ENCODE measurements at regions of chr6 and their contacts with region 1.

Region 1: GRCh38 chr6:11424395-11425050 is 113.0 kb upstream of the TMEM170B start:
- DNase-seq: no peak
- ATAC-seq: no peak
- H3K4me3 ChIP-seq: no peak overlapping the region
- H3K4me3 Mint-ChIP-seq: no peak overlapping the region
- H3K27ac ChIP-seq: no peak overlapping the region
- H3K27ac Mint-ChIP-seq: no peak overlapping the region
- H3K4me1 ChIP-seq: peaks cover 6% of the 10 kb centered on the region
- H3K4me1 Mint-ChIP-seq: peaks cover 13% of the 10 kb centered on the region
- H3K27me3 ChIP-seq: no peaks in the 10 kb centered on the region
- H3K27me3 Mint-ChIP-seq: no peaks in the 10 kb centered on the region
- CTCF ChIP-seq: no peak

Region 2: DNA sequence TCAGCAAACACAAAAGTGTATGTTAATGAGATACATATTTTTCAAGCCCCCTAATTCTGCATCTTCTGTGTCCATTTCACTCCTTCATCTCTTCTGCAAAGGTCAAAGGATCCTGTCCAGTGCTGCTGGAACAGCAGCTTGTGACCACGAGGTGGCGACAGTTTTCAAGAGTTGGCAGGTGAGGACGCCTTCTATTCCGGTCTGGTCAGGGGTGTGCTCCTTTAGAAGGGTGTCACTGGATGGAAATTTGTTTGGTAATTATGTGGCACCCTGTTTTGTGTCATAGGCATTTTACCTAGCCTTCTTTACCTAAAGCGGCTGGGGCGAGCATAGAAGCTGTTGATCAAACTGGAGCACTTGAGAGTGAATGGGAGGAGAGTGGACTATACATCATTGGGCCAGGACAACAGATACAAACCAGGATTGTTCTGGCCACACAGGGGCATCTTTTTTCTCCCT is 280.1 kb before region 1 on chr6:
- CTCF ChIA-PET with region 1: no interaction called
- POLR2A ChIA-PET with region 1: no interaction called
- intact Hi-C with region 1: no loop called
- DNase-seq: peak; percentile 51 to 84 (median 64)
- ATAC-seq: peak; percentile 73
- H3K4me3 ChIP-seq: no peak overlapping the region
- H3K4me3 Mint-ChIP-seq: no peak overlapping the region
- H3K27ac ChIP-seq: no peak overlapping the region
- H3K27ac Mint-ChIP-seq: no peak overlapping the region
- H3K4me1 ChIP-seq: peaks cover 5% of the 10 kb centered on the region
- H3K4me1 Mint-ChIP-seq: no peaks in the 10 kb centered on the region
- H3K27me3 ChIP-seq: no peaks in the 10 kb centered on the region
- H3K27me3 Mint-ChIP-seq: no peaks in the 10 kb centered on the region
- CTCF ChIP-seq: peak; percentile 98

Region 3: DNA sequence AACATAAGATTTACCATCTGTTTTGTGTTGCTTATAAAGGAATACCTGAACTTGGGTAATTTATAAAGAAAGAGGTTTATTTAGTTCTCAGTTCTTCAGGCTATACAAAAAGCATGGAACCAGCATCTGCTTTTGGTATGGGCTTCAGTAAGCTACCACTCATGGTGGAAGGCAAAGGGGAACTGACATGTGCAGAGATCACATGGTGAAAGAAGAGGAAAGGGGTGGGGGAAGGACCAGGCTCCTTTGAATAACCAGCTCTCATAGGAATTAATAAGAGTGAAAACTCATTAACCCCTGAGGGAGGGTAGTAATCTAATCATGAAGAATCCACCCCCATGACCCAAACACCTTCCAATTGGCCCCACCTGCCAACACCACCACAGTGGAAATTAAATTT is 23.5 kb after region 1 on chr6:
- CTCF ChIA-PET with region 1: no interaction called
- POLR2A ChIA-PET with region 1: no interaction called
- intact Hi-C with region 1: loop called in 1 of 2 experiments (anchors 1 kb)
- DNase-seq: no peak
- ATAC-seq: no peak
- H3K4me3 ChIP-seq: no peak overlapping the region
- H3K4me3 Mint-ChIP-seq: no peak overlapping the region
- H3K27ac ChIP-seq: no peak overlapping the region
- H3K27ac Mint-ChIP-seq: no peak overlapping the region
- H3K4me1 ChIP-seq: no peaks in the 10 kb centered on the region
- H3K4me1 Mint-ChIP-seq: no peaks in the 10 kb centered on the region
- H3K27me3 ChIP-seq: no peaks in the 10 kb centered on the region
- H3K27me3 Mint-ChIP-seq: no peaks in the 10 kb centered on the region
- CTCF ChIP-seq: no peak

Measured in CD4-positive, alpha-beta T cell (primary cell).